PC-3 (cell line): ENCODE measurements at regions of chr19 and their contacts with region 1.

Region 1: GRCh38 chr19:13952154-13953035 is at the start of gene DCAF15:
- DNase-seq: peak; percentile 100
- ATAC-seq: peak; percentile 98
- H3K4me3 ChIP-seq: peak within 1 kb of the TSS; percentile 88
- H3K27ac ChIP-seq: peak within 1 kb of the TSS; percentile 45; the same call in 1 of the 2 replicates
- H3K4me1 ChIP-seq: peaks cover 10% of the 10 kb centered on the region
- H3K27me3 ChIP-seq: no peaks in the 10 kb centered on the region
- CTCF ChIP-seq: no peak
- total RNA-seq, gene DCAF15: 50.8 and 85.2 TPM in 2 replicates

Region 2: GRCh38 chr19:13880059-13881043 is 72.0 kb before region 1 on chr19:
- CTCF ChIA-PET with region 1: no interaction called
- POLR2A ChIA-PET with region 1: no interaction called
- intact Hi-C with region 1: loop called (anchors 2 kb)
- DNase-seq: peak; percentile 99
- ATAC-seq: peak; percentile 89
- H3K4me3 ChIP-seq: peak overlapping the region; percentile 54
- H3K27ac ChIP-seq: peak overlapping the region; percentile 62
- H3K4me1 ChIP-seq: peaks cover 11% of the 10 kb centered on the region
- H3K27me3 ChIP-seq: no peaks in the 10 kb centered on the region
- CTCF ChIP-seq: peak; percentile 99

Region 3: DNA sequence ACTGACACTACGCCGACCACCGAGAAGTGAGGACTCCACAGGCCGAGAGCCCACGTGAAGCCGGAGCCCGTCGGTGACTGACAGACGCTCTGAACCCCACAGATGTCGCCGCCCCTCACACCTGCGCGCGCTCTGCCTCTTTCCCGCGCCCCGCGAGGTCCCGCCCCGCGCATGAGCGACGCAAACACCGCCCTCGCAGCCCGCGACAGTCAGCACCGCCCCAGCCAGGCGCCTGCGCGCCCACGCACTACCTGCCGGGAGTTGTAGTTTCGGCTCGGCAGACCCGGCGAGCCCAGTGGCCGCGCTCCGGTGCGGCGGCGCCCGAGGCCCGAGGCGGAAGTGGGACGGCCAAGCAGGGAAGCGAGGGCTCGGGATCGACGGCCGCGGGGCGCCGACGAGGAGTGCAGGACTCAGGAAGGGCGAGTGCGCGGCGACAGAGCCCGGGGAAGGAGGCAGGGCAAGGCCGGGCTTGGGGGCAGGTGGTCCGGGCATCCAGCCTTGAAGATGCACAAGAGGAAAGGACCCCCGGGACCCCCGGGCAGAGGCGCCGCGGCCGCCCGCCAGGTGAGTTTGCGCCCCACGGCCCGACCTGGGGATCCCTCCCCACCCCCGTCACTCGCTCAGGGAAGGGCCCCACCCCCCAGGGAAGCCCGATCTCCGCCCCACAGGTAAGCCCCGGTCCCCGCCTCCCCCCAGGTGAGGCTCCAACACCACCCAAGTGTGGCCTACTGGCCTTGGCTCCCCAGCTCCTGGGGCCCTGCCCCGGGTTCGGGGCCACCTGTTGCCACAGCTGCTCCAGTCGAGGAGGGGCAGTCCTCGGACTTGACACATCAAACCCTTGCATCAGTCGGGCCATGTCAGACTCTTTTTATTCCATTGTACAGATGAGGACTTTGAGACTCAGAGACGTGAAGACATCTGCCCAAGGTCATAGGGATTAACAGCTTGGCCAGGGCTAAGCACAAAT is 46.2 kb before region 1 on chr19 and contains the starts of genes BRME1 and CC2D1A:
- CTCF ChIA-PET with region 1: interaction called, 4 read pairs
- POLR2A ChIA-PET with region 1: no interaction called
- intact Hi-C with region 1: loop called (anchors 1 kb)
- DNase-seq: peak; percentile 94
- ATAC-seq: peak; percentile 99
- H3K4me3 ChIP-seq: peak within 1 kb of the TSS; percentile 81
- H3K27ac ChIP-seq: no peak within 1 kb of the TSS
- H3K4me1 ChIP-seq: peaks cover 11% of the 10 kb centered on the region
- H3K27me3 ChIP-seq: no peaks in the 10 kb centered on the region
- CTCF ChIP-seq: no peak
- total RNA-seq, gene BRME1: 5.4 and 6.0 TPM in 2 replicates
- total RNA-seq, gene CC2D1A: 67.7 and 102 TPM in 2 replicates